Stomach (tissue), 19 donors: ENCODE measurements at regions of chr1 and their contacts with region 1.

Region 1: DNA sequence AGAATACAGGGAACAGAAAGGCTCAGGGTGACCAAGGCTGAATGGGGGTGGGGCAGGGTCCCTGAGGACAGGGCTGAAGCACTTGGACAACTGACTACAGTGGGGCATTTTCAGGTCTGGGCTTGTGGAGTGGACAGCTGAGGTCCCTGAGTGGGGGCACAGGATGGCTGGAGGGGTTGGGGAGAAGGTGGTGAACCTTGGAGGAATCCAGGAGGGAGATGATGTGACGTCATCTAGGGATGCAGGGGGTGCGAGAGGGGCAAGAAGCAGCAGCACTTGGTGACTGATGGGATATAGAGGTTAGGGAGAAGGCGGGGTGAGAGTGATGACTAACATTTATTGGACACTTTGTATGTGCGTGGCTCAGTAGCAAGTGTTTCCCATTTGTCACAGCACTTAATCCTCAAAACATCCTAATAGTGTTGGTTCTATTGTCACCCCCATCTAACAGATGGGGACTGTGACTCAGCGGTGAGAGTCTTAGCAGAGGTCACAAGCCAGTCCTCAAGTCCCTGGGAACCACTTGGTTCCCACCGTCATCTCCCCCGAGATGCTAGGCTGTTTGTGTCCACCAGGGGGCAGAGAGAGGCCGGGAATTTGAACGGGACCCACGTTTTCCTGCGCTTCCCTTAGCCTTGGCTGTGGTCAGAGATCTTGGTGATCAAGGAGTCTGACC is 27.9 kb upstream of the BMP8B start:
- DNase-seq: peak; percentile 75 to 88
- H3K4me3 ChIP-seq: no peak overlapping the region
- H3K27ac ChIP-seq: no peak overlapping the region
- H3K4me1 ChIP-seq: peaks cover 5 to 40% (median 21%) of the 10 kb centered on the region in 4 donors
- H3K27me3 ChIP-seq: peaks cover 0 to 39% (median 0%) of the 10 kb centered on the region in 3 donors
- CTCF ChIP-seq: peak in 6 of 7 experiments; percentile 43 to 98 (median 88)
- EP300 ChIP-seq: no peak
- POLR2A ChIP-seq: no peak

Region 2: GRCh38 chr1:39901698-39902459 is 85.3 kb after region 1 on chr1 and contains the start of gene MYCL:
- intact Hi-C with region 1: loop called (anchors 5 kb)
- DNase-seq: peak; percentile 94 to 95
- H3K4me3 ChIP-seq: peak within 1 kb of the TSS; percentile 64 to 78 (median 68)
- H3K27ac ChIP-seq: peak within 1 kb of the TSS; percentile 79 to 90 (median 83)
- H3K4me1 ChIP-seq: peaks cover 10 to 44% (median 34%) of the 10 kb centered on the region in 4 donors
- H3K27me3 ChIP-seq: peaks cover 0 to 62% (median 27%) of the 10 kb centered on the region in 3 donors
- CTCF ChIP-seq: peak in 5 of 7 experiments; percentile 62 to 93 (median 78)
- EP300 ChIP-seq: no peak
- POLR2A ChIP-seq: no peak
- total RNA-seq, gene MYCL: 4.5 to 39.4 (median 5.8) TPM in 4 of 5 donors, not detected in the other

Region 3: GRCh38 chr1:39952359-39953110 is 136.0 kb after region 1 on chr1:
- intact Hi-C with region 1: no loop called
- DNase-seq: peak; percentile 44 to 88
- H3K4me3 ChIP-seq: no peak overlapping the region
- H3K27ac ChIP-seq: peak overlapping the region in 3 of 5 donors; percentile 6 to 29 (median 24)
- H3K4me1 ChIP-seq: peaks cover 15 to 59% (median 35%) of the 10 kb centered on the region in 4 donors
- H3K27me3 ChIP-seq: peaks cover 0 to 8% (median 0%) of the 10 kb centered on the region in 3 donors
- CTCF ChIP-seq: no peak
- EP300 ChIP-seq: no peak
- POLR2A ChIP-seq: no peak

Region 4: GRCh38 chr1:39973503-39974135 is 157.1 kb after region 1 on chr1:
- intact Hi-C with region 1: loop called (anchors 2 kb)
- DNase-seq: peak; percentile 86 to 88
- H3K4me3 ChIP-seq: no peak overlapping the region
- H3K27ac ChIP-seq: no peak overlapping the region
- H3K4me1 ChIP-seq: peaks cover 0 to 16% (median 6%) of the 10 kb centered on the region in 4 donors
- H3K27me3 ChIP-seq: no peaks in the 10 kb centered on the region
- CTCF ChIP-seq: peak in 5 of 7 experiments; percentile 88 to 98 (median 95)
- EP300 ChIP-seq: no peak
- POLR2A ChIP-seq: no peak

Region 5: DNA sequence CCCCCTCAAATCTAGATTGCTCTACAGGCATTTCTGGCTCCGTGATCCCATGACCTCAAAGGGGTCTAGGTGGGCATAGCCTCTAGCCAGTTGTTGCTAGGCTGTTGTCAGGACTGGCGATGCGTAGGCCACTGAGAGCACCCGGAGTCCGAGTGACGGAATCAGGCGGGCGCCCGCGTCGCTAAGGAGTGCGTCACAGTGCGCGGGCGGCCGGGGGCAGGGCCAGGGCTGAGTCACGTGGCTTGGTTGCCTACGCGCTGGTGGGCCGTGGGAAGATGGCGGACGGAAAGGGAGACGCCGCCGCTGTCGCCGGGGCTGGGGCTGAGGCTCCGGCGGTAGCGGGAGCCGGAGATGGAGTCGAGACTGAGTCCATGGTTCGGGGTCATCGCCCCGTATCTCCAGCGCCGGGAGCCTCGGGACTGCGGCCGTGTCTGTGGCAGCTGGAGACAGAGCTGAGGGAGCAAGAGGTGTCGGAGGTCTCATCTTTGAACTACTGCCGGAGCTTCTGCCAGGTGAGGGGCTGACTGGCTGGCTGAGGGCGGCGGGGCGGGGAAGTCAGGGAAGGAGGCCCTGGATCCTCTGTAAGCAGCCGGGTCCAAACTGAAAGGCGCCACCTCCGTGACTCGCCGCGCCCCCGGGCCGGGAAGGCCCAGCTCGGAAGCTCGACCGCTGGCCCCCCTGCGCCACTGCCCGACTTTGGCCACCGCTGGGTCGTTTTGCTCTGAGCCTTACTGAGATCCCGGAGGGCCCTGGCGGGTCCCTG is 344.8 kb after region 1 on chr1 and contains the start of gene RLF:
- intact Hi-C with region 1: no loop called
- DNase-seq: peak; percentile 96 to 99
- H3K4me3 ChIP-seq: peak within 1 kb of the TSS; percentile 74 to 98 (median 96)
- H3K27ac ChIP-seq: peak within 1 kb of the TSS; percentile 93 to 97 (median 95)
- H3K4me1 ChIP-seq: peaks cover 25 to 49% (median 38%) of the 10 kb centered on the region in 4 donors
- H3K27me3 ChIP-seq: no peaks in the 10 kb centered on the region
- CTCF ChIP-seq: no peak
- EP300 ChIP-seq: peak; percentile 37
- POLR2A ChIP-seq: peak in 2 of 4 donors; percentile 42 to 67
- total RNA-seq, gene RLF: 12.3 to 38.7 (median 20.1) TPM